ENCODE measurements at regions of chr20 and their contacts with region 1.

Region 1: DNA sequence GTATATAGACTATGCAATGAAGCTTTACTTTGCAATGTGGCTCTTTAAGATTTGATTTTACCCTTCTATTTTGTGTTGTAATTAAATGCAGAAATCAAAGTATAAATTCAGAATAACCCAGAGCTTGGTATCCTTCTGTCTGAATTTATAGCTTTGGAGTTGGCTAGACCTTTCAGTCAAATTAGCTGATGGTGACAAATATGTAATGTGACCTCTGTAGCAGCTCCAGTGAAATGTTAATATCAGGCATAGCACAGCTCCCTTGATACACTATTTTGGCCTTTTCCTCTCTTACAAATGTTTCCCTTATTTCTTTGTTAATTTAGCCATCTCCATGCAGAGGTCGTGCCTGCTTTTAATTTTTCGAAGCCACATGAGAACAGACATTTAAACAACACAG is 11.1 kb downstream of the CBFA2T2 start:
- DNase-seq: no peak
- ATAC-seq: no peak
- H3K4me3 Mint-ChIP-seq: no peak overlapping the region
- H3K27ac Mint-ChIP-seq: no peak overlapping the region
- H3K4me1 Mint-ChIP-seq: peaks cover 27% of the 10 kb centered on the region
- H3K27me3 Mint-ChIP-seq: no peaks in the 10 kb centered on the region

Region 2: GRCh38 chr20:33751775-33752174 is 250.8 kb after region 1 on chr20:
- CTCF ChIA-PET with region 1: no interaction called
- POLR2A ChIA-PET with region 1: interaction called, 11 read pairs
- intact Hi-C with region 1: no loop called
- DNase-seq: no peak
- ATAC-seq: no peak
- H3K4me3 Mint-ChIP-seq: no peak overlapping the region
- H3K27ac Mint-ChIP-seq: no peak overlapping the region
- H3K4me1 Mint-ChIP-seq: peaks cover 3% of the 10 kb centered on the region
- H3K27me3 Mint-ChIP-seq: no peaks in the 10 kb centered on the region

Measured in activated CD4-positive, alpha-beta T cell treated with anti-CD3 and anti-CD28 coated beads for 36 hours (primary cell).